ENCODE measurements at regions of chr3 and their contacts with region 1.

Region 1: GRCh38 chr3:42159706-42160472 is 68.7 kb downstream of the TRAK1 start:
- DNase-seq: peak; percentile 86 to 93
- H3K4me3 ChIP-seq: peak overlapping the region; percentile 72
- H3K27ac ChIP-seq: peak overlapping the region; percentile 63
- H3K4me1 ChIP-seq: peaks cover 63% of the 10 kb centered on the region
- H3K27me3 ChIP-seq: no peaks in the 10 kb centered on the region
- CTCF ChIP-seq: no peak

Region 2: GRCh38 chr3:41943311-41943843 is 216.5 kb before region 1 on chr3:
- CTCF ChIA-PET with region 1: no interaction called
- POLR2A ChIA-PET with region 1: no interaction called
- intact Hi-C with region 1: no loop called
- DNase-seq: no peak
- H3K4me3 ChIP-seq: no peak overlapping the region
- H3K27ac ChIP-seq: no peak overlapping the region
- H3K4me1 ChIP-seq: no peaks in the 10 kb centered on the region
- H3K27me3 ChIP-seq: no peaks in the 10 kb centered on the region
- CTCF ChIP-seq: no peak

Region 3: DNA sequence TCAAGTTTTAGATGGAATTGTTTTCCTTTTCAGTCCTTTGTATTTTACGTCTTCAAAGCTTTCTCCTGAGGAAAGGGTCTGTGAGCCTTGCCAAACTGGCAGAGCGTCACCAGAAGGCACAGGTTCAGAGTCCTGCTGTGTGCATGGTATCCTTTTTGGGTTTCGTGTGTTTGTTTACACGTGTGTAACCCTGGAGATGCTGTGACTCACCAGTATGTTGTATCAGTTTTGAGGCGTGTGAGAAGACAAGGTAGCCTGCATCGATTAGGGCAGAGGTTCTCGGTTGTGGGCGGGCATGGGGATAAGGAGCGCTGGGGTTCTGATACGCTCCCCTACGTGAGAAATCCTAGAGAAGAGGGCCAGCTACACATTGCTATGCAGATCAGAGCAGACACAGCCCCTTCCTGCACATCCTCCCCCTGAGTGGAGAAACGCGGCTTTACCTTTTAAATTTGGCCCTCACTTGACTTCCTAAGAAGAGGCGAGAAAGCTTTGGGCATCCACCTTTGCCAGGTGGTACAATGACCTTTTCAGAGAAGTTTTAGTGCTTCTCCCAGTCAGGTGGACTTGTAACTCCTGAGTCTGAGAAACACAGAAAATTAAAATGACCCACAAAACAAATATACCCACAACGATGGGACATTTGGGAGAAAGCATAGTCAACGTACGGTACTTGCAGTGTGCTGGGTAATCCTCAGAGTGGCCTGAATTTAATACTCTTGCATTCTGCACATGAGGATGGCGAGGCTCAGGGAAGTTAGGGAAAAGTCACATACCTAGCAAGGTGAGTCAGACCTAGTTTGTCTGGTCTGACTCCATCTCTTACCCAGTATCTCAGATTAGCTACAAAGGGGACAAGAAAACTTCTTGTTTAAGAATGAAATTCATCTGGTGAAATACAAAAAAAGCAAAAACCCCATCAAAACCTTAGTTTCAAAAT is 30.6 kb before region 1 on chr3:
- CTCF ChIA-PET with region 1: no interaction called
- POLR2A ChIA-PET with region 1: interaction called, 4 read pairs
- intact Hi-C with region 1: loop called (anchors 2 kb)
- DNase-seq: peak; percentile 58 to 92
- H3K4me3 ChIP-seq: peak overlapping the region; percentile 50
- H3K27ac ChIP-seq: peak overlapping the region; percentile 97
- H3K4me1 ChIP-seq: peaks cover 42% of the 10 kb centered on the region
- H3K27me3 ChIP-seq: no peaks in the 10 kb centered on the region
- CTCF ChIP-seq: no peak

Region 4: DNA sequence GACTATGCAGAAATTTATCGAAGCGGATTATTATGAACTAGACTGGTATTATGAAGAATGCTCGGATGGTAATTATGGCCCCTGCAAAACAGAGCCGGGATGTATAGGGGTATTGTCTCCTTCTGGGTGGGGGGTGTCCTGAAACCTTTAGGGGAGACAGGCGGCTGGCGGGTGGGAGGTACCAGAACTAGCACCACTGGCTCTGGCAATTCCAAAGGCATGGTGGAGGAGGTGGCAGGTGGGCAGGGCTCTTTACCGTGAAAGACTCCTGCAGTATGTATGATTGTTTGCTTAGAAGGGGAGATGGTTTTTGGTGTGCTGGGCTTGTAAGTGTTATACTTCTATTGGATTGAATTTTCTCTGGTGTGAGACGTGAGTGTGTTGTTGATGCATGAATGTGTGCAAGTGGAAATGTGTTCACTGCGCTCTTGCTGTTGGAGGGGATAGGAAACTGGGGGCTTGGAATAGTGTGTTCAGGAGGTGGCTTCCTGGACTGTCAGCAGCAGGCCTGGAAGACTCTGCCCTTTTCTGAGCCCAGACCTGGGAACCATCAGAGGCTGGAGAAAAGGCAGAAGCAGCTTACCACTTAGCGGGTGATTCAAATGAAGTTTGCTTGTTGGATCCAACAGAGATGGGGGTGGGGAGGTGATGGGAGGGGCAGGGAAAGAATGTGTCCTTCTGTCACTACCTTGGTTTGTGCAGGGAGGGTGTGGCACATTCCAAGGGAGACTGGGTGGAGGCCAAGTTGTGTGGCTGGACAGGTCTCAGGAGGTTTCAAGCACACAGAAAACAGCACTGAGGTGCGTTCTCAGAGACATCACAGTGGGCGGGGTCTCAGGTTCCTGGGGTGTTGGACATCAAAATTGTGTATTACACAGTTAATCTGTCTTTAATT is 10.1 kb before region 1 on chr3:
- CTCF ChIA-PET with region 1: no interaction called
- POLR2A ChIA-PET with region 1: interaction called, 17 read pairs
- intact Hi-C with region 1: loop called (anchors 1 kb)
- DNase-seq: peak; percentile 89 to 91
- H3K4me3 ChIP-seq: no peak overlapping the region
- H3K27ac ChIP-seq: peak overlapping the region; percentile 82
- H3K4me1 ChIP-seq: peaks cover 29% of the 10 kb centered on the region
- H3K27me3 ChIP-seq: no peaks in the 10 kb centered on the region
- CTCF ChIP-seq: no peak

Region 5: GRCh38 chr3:42179110-42179725 is 19.3 kb after region 1 on chr3:
- CTCF ChIA-PET with region 1: interaction called, 3 read pairs
- POLR2A ChIA-PET with region 1: interaction called, 24 read pairs
- intact Hi-C with region 1: loop called (anchors 1 kb)
- DNase-seq: peak; percentile 77 to 94
- H3K4me3 ChIP-seq: peak overlapping the region; percentile 26; the same call in 1 of the 2 replicates
- H3K27ac ChIP-seq: peak overlapping the region; percentile 76
- H3K4me1 ChIP-seq: peaks cover 20% of the 10 kb centered on the region
- H3K27me3 ChIP-seq: no peaks in the 10 kb centered on the region
- CTCF ChIP-seq: no peak

Region 6: DNA sequence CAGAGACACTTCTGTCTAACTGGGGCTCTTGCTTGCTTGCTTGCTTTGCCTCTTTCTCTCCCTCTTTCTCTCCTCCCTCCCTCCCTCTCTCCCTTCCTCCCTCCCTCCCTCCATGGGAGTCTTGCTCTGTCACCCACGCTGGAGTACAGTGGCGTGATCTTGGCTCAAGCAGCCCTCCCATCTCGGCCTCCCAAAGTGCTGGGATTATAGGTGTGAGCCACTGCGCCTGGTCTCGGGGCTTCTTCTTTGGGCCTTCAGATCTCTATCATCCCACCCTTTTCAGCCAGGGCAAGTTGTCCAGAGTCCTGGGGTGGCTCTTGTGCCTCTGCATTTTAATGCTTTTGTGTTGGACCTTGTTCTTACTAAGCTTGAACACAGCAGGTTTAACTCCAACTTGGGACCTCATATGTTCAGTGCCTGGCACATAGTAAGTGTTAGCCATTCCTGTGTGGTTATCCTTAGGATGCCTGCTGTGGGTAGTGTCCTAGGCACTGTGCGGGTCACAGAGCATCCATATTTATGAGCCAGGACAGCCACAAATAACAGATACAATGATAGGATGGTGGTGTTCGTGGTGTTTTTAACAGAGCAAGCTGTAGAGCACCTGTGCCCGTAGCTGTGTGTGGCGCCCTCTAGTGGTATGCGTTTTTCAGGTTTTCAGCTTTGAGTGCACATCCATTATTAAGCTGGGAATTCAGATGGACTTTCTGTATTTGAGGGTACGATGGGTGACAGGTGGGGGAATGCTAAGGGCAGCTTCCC is 31.0 kb after region 1 on chr3:
- CTCF ChIA-PET with region 1: interaction called, 4 read pairs
- POLR2A ChIA-PET with region 1: interaction called, 22 read pairs
- intact Hi-C with region 1: no loop called
- DNase-seq: peak; percentile 45 to 66
- H3K4me3 ChIP-seq: no peak overlapping the region
- H3K27ac ChIP-seq: no peak overlapping the region
- H3K4me1 ChIP-seq: no peaks in the 10 kb centered on the region
- H3K27me3 ChIP-seq: no peaks in the 10 kb centered on the region
- CTCF ChIP-seq: peak; percentile 88

Region 7: DNA sequence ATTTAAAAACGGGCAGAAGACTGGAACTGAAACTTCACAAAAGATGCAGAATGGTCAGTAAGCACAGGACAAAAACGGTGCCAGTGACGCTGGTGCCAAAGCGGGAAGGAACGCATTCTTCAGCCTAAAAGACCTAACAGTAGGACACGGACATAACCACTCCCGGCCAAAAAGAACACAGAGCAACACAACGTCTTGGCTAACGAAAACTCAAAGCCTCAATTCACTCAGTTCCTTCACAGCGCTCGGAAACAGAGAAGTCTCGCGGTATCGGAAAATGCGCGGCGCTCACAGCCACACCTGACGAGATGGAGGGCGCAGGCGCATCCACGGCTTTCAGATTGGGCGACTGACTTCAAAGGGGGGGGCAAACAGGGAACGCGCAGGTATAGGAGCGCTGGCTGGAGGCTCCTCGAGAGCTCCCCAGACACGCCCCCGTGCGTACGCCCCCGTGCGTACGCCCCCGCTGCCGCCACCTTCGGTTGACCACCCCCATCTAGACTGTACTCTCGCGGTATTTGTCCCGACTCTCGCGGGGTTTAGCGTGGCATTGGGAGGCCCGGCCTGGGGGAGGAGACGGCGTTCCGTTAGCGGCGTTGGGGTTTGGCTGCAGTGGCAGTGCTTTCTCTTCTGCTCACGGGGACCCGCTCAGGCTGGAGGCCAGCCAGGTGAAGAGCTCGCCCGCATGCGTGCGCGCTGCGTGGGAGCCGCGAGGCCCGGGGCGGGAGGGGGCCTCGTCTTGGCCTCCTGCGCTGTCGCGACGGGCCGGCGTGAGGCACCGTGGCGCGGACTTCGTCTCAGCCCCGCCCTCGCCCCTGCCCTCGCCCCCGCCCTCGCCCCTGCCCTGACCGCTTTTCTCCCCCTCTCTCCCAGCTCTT is 440.5 kb after region 1 on chr3 and contains the start of gene NKTR:
- CTCF ChIA-PET with region 1: no interaction called
- POLR2A ChIA-PET with region 1: no interaction called
- intact Hi-C with region 1: loop called (anchors 1 kb)
- DNase-seq: peak; percentile 98 to 99
- H3K4me3 ChIP-seq: peak within 1 kb of the TSS; percentile 74
- H3K27ac ChIP-seq: peak within 1 kb of the TSS; percentile 86
- H3K4me1 ChIP-seq: peaks cover 27% of the 10 kb centered on the region
- H3K27me3 ChIP-seq: no peaks in the 10 kb centered on the region
- CTCF ChIP-seq: no peak
- total RNA-seq, gene NKTR: 66.0 and 70.5 TPM in 2 replicates

Region 8: DNA sequence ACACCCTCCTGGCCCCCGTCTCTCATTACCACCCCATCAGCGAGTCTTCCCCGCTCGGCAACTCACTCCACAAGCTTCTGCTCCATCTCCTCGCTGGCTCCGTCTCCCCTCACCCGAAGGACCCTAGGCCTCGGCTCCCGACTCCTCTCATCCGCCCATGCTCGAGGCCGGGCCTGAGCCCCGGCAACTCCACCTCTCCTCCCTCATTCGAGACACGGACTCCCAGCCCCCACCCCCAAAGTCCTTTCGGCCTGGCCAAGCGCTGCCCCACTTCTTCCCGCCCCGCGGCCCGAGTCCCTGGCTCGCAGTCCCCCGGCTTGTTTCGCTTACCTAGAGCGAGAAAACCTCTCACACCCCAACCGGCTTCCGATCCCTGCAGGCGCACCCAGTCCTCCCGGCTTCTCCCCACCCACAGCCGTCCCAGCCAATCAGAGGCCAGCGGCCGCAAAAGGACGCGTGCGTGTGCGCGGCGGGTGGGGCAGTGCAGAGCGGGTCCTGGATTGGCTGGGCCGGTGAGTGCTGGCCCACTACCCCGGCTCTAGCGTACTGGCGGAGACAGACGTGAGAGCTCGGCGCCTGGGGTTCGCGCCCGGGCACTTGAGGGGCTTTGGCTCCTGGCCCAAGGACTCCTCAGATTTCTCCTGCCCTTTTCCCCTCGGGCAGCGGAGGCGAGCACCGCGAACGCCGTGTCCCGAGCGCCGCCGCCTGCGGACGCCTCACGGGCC is 644.4 kb after region 1 on chr3 and contains the start of gene HIGD1A:
- CTCF ChIA-PET with region 1: no interaction called
- POLR2A ChIA-PET with region 1: interaction called, 20 read pairs
- intact Hi-C with region 1: no loop called
- DNase-seq: peak; percentile 91 to 93
- H3K4me3 ChIP-seq: peak within 1 kb of the TSS; percentile 84
- H3K27ac ChIP-seq: peak within 1 kb of the TSS; percentile 81
- H3K4me1 ChIP-seq: peaks cover 24% of the 10 kb centered on the region
- H3K27me3 ChIP-seq: no peaks in the 10 kb centered on the region
- CTCF ChIP-seq: no peak
- total RNA-seq, gene HIGD1A: 48.2 and 69.7 TPM in 2 replicates

Measured in PC-9 (cell line).